ENCODE measurements at regions of chr7 and their contacts with region 1.

Region 1: DNA sequence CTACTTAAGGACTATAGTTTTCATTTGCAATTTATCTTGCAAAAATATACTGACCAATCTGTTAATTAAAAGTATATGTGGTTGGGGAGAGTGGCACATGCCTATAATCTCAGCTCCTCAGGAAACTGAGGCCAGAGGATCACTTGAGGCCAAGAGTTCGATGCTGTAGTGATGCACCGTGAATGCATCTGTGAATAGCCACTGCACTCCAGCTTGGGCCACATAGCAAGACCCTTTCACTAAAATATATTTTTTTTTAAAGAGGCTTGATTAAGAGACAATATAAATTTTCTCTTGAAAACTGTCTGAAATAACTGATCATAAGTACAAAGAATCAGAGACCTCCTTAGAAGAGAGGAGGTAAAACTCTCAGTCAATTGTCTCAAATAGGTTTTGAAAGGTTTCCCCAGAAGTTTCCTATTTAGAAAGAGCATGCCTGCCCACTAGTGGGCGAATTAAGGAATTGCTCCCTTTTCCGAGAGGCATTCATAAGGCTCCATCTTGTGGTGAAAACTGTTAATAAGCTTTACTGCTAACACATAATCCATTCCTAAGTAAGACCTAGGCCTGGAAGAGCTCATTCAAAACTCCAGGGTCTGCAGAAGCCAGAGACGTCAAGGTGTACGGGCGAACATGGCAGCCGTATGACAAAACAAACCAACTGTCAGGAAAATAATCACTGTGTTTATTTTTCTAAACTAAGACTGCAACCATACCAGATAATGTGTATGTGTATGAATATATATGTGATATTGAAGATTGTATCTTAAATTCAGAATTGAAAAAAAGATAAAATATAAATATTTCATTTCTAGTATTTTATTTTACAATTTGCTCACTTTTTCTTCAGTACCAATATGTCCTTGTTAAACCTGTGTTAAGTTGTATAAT is 6.8 kb upstream of the TAS2R40 start:
- DNase-seq: peak in 4 of 5 donors; percentile 19 to 56 (median 34)
- H3K4me3 ChIP-seq: no peak overlapping the region
- H3K27ac ChIP-seq: no peak overlapping the region
- H3K4me1 ChIP-seq: no peaks in the 10 kb centered on the region
- H3K27me3 ChIP-seq: no peaks in the 10 kb centered on the region
- CTCF ChIP-seq: peak; percentile 85 to 92 (median 90)
- EP300 ChIP-seq: no peak
- POLR2A ChIP-seq: no peak

Region 2: GRCh38 chr7:142853739-142854371 is 361.2 kb before region 1 on chr7:
- intact Hi-C with region 1: loop called in 1 of 4 experiments (anchors 5 kb)
- DNase-seq: peak; percentile 53 to 73 (median 65)
- H3K4me3 ChIP-seq: peak overlapping the region; percentile 89
- H3K27ac ChIP-seq: peak overlapping the region; percentile 60 to 87
- H3K4me1 ChIP-seq: peaks cover 1% of the 10 kb centered on the region
- H3K27me3 ChIP-seq: no peaks in the 10 kb centered on the region
- CTCF ChIP-seq: peak; percentile 45 to 71 (median 62)
- EP300 ChIP-seq: no peak
- POLR2A ChIP-seq: no peak

Region 3: GRCh38 chr7:142873281-142873787 is 341.7 kb before region 1 on chr7:
- intact Hi-C with region 1: loop called in 1 of 4 experiments (anchors 10 kb)
- DNase-seq: no peak
- H3K4me3 ChIP-seq: no peak overlapping the region
- H3K27ac ChIP-seq: no peak overlapping the region
- H3K4me1 ChIP-seq: no peaks in the 10 kb centered on the region
- H3K27me3 ChIP-seq: no peaks in the 10 kb centered on the region
- CTCF ChIP-seq: no peak
- EP300 ChIP-seq: no peak
- POLR2A ChIP-seq: no peak

Region 4: DNA sequence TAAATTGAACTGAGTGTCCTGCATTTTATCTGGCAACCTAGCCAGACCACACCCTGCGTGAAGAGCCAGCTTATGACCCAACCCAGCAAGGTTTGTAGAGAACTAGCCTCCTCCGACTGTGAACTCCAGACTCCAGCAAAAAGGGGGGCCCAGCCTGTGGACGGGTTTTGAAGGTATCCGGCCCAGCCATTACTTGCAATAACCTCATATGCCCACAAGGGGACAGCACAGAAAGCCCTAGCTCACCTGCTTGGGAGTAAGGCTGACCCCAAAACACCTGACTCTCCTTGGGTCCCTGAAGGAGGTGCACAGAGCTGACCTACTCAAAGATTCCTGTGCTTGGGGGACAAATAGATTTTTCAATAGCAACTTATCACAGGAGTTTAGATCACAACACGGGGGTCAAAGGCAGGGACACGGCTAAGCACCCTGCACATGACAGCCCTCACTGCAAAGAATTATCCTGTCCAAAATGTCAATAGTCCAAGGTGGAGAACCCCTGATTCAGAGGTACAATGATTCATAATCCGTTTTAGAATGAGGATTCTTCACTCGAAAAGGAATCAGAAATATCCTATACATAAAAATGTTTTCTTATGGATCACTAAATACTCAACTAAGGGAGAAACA is 334.0 kb before region 1 on chr7:
- intact Hi-C with region 1: loop called in 2 of 4 experiments (anchors 10 kb)
- DNase-seq: no peak
- H3K4me3 ChIP-seq: no peak overlapping the region
- H3K27ac ChIP-seq: no peak overlapping the region
- H3K4me1 ChIP-seq: no peaks in the 10 kb centered on the region
- H3K27me3 ChIP-seq: no peaks in the 10 kb centered on the region
- CTCF ChIP-seq: no peak
- EP300 ChIP-seq: no peak
- POLR2A ChIP-seq: no peak

Region 5: DNA sequence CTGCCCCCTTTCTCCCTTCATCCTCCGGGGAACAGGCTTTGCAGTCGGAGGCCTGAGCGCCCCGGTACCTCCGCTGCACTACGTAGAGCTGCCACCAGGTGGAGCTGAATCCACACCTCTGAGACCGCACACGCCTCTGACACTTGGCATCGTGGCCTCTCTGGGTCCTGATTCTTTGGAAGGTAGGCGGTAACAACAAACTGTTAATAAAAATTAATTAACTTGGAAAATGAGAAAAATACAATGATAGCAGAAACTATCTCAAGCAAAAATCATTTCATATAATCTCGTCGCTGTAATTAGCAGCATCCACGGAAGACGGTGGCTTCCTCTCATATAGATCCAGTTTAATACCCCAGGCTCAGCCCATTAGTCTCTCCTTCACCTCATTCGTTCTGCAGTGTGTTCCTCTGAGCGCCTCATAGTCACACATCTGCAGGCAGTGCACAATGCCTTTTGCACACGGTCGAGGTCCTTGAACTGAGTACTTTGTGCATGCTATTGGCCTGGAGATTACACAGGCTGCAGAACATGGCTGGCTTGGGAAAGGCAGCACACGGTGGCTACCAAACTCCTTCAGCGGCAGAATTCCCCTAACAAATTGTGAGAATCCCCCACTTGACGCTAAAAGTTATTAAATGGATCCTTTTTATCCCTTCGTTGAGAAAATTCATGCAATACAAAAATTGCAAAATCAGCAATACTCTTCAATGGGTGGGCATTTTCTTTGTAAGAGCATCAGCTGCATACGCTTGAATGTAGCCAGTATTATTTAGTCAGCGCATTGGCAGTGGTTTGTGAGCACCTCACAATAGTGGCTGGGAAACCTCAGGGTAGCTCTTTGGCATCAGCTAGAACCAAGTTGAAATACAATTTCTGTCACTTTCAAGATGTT is 206.8 kb before region 1 on chr7:
- intact Hi-C with region 1: loop called in 3 of 4 experiments (anchors 5 to 10 kb)
- DNase-seq: peak; percentile 31 to 83 (median 62)
- H3K4me3 ChIP-seq: no peak overlapping the region
- H3K27ac ChIP-seq: no peak overlapping the region
- H3K4me1 ChIP-seq: no peaks in the 10 kb centered on the region
- H3K27me3 ChIP-seq: no peaks in the 10 kb centered on the region
- CTCF ChIP-seq: peak; percentile 21 to 75 (median 42)
- EP300 ChIP-seq: no peak
- POLR2A ChIP-seq: no peak

Region 6: DNA sequence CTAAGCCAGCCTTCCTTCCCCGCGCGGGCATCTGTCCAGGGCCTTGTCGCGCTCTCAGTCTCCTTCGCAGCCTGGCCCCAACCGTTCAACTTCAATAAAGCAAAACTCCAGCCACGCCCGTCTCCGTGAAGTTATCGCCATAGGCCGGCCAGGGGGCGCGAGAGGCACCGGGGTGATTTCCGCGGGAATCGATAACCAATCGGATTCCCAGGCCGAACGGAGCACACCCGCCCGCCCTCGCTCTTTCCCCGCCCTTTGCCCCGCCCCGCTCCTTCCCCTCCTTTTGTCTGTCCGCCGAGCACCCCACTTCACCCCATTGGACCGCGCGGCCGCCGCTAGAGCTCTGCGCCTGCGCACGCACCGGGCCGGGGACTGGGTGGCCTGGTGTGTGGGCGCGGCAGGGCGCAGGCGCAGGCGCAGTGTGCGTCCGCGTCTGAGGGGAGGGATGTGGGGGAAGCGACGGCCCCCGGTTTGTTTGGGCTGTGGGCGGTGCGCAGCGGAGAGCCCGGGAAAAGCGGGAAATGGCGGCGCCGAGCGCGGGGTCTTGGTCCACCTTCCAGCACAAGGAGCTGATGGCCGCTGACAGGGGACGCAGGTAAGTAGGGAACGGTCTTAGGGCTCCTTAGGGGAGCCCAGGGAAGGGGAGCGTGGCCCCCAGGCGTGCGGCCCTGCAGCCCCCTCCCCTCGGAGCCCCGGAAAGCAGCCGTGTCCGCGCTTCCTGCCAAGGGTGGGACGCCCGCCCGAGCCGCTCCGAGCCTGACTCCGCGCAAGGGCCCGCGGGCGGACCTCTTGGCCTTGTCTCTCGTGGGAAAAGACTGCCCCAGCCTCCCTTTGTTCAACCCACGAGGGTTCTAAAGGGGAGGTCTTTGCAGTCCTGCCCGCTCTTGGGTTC is 73.1 kb after region 1 on chr7 and contains the start of gene CASP2:
- intact Hi-C with region 1: no loop called
- DNase-seq: peak; percentile 96 to 99 (median 98)
- H3K4me3 ChIP-seq: peak within 1 kb of the TSS; percentile 72
- H3K27ac ChIP-seq: peak within 1 kb of the TSS; percentile 75 to 82
- H3K4me1 ChIP-seq: peaks cover 2% of the 10 kb centered on the region
- H3K27me3 ChIP-seq: no peaks in the 10 kb centered on the region
- CTCF ChIP-seq: no peak
- EP300 ChIP-seq: peak; percentile 6
- POLR2A ChIP-seq: peak; percentile 63
- total RNA-seq, gene CASP2: 7.7 to 26.6 (median 23.0) TPM

Region 7: DNA sequence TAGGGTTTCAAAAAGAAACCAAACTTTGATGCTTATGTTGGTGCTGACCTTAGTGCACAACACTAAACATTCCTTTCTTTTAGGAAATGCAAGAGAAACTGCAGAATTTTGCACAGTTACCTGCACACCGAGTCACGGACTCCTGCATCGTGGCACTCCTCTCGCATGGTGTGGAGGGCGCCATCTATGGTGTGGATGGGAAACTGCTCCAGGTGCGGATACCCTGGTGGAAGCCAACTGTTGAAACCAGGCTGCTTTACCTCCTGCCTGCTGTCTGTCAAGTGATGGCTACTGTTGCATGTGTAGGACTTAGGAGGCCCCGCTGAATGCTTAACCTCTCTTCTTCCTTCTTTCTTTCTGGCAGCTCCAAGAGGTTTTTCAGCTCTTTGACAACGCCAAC is 84.8 kb after region 1 on chr7:
- intact Hi-C with region 1: no loop called
- DNase-seq: no peak
- H3K4me3 ChIP-seq: no peak overlapping the region
- H3K27ac ChIP-seq: no peak overlapping the region
- H3K4me1 ChIP-seq: no peaks in the 10 kb centered on the region
- H3K27me3 ChIP-seq: no peaks in the 10 kb centered on the region
- CTCF ChIP-seq: no peak
- EP300 ChIP-seq: no peak
- POLR2A ChIP-seq: no peak

Region 8: DNA sequence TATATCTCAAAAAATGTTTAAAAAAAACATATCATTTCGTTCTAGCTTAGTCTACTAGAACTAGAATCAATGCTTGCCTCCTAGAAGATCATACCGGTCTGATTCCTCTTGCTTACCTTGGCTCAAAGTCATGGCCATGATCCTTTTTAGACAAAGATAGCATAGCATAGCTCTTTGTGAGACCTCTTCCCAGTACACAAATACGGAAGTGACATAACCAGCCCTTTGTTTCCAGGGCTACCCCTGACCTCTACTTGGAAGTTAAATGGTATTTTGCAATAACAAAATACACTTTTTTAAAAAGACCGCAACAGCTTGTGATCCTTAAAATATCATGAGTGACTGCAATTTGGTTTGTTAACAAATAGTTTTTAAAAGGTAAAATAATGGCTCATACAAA is 1319.2 kb after region 1 on chr7:
- intact Hi-C with region 1: no loop called
- DNase-seq: no peak
- H3K4me3 ChIP-seq: no peak overlapping the region
- H3K27ac ChIP-seq: no peak overlapping the region
- H3K4me1 ChIP-seq: no peaks in the 10 kb centered on the region
- H3K27me3 ChIP-seq: no peaks in the 10 kb centered on the region
- CTCF ChIP-seq: no peak
- EP300 ChIP-seq: no peak
- POLR2A ChIP-seq: no peak

Measured in ovary (tissue), 10 donors.